ENCODE measurements at regions of chr12 and their contacts with region 1.

Region 1: GRCh38 chr12:130796985-130797686 is 41.9 kb downstream of the STX2 start:
- DNase-seq: no peak
- H3K4me3 ChIP-seq: no peak overlapping the region
- H3K27ac ChIP-seq: no peak overlapping the region
- H3K4me1 ChIP-seq: no peaks in the 10 kb centered on the region
- H3K27me3 ChIP-seq: no peaks in the 10 kb centered on the region
- CTCF ChIP-seq: no peak
- POLR2A ChIP-seq: no peak

Region 2: DNA sequence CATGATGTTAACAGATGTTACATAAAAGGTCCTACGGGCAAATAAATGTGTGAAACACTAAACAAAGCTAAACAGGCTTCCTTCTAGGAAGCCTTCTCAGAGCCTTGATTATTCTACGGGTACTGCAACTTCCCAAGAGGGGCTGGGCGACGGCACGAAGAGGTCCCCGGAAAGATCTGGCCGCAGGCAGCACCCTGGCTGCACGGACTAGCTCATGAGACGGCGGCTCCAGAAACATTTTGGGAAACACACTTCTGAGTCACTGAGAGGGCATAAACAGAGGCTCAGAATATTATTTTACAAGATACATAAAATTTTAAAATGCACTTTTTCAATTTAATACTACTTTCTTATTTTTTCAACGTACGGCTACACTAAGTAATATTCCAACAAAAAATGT is 22.5 kb after region 1 on chr12:
- intact Hi-C with region 1: loop called (anchors 1 kb)
- DNase-seq: no peak
- H3K4me3 ChIP-seq: no peak overlapping the region
- H3K27ac ChIP-seq: no peak overlapping the region
- H3K4me1 ChIP-seq: no peaks in the 10 kb centered on the region
- H3K27me3 ChIP-seq: no peaks in the 10 kb centered on the region
- CTCF ChIP-seq: no peak
- POLR2A ChIP-seq: no peak

Measured in vagina (tissue), 2 donors.